Dorsolateral prefrontal cortex (tissue), 120 donors: ENCODE measurements at regions of chr1 and their contacts with region 1.

Region 1: DNA sequence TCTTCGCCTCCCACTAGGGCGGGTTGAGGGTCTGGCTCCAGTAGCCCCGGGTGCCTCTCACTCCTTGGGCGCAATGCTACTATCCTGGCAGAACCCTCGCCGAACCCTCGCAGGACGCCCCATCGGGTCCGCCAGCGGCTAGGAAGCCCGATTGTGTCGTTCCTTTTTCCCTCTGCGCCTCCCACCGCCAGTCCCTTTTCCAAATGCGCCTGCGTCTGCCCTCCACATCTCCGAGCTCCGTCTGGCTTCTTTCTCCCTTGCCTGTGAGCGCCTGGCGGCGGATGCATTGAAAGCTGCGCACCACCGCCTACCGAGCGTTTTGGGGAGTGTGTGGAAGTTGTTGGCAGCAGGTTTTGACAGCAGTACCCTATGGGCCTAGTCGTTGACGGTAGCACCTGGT is 1.0 kb upstream of the DIRAS3 start:
- DNase-seq: peak in 3 of 10 donors; percentile 46 to 52 (median 49)
- H3K4me3 ChIP-seq: peak overlapping the region in 46 of 59 donors; percentile 4 to 64 (median 38)
- H3K27ac ChIP-seq: no peak overlapping the region
- H3K27me3 ChIP-seq: peaks cover 0 to 11% (median 0%) of the 10 kb centered on the region in 45 donors
- CTCF ChIP-seq: peak in 4 of 56 donors; percentile 14 to 18 (median 16)

Region 2: DNA sequence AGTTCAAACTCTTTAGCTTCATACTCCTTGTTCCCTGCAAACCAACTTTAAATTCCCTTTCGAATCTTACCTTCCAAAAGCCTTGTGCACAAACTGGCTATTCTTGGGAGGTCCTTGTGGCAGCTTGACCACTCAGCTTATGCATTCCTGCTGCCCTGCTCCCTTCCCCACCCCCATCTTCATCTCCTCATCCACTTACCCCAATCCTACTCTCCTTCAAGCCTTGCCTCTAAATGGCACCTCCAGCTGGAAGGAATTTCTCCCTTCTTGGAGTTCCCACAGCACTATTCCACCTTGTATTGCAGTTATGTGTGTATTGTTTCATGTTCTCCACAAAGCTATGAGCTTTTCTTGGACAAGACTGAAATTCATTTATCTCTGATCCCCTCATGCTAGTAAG is 14.3 kb after region 1 on chr1:
- intact Hi-C with region 1: loop called in 1 of 2 experiments (anchors 2 kb)
- DNase-seq: no peak
- H3K4me3 ChIP-seq: no peak overlapping the region
- H3K27ac ChIP-seq: no peak overlapping the region
- H3K27me3 ChIP-seq: no peaks in the 10 kb centered on the region
- CTCF ChIP-seq: no peak